Colonic mucosa (tissue), 4 donors: ENCODE measurements at regions of chr18 and their contacts with region 1.

Region 1: GRCh38 chr18:12890506-12890905 is 6.5 kb upstream of the PTPN2 start:
- DNase-seq: no peak
- H3K4me3 ChIP-seq: no peak overlapping the region
- H3K27ac ChIP-seq: no peak overlapping the region
- H3K4me1 ChIP-seq: no peaks in the 10 kb centered on the region
- H3K27me3 ChIP-seq: peaks cover 5% of the 10 kb centered on the region
- CTCF ChIP-seq: no peak

Region 2: DNA sequence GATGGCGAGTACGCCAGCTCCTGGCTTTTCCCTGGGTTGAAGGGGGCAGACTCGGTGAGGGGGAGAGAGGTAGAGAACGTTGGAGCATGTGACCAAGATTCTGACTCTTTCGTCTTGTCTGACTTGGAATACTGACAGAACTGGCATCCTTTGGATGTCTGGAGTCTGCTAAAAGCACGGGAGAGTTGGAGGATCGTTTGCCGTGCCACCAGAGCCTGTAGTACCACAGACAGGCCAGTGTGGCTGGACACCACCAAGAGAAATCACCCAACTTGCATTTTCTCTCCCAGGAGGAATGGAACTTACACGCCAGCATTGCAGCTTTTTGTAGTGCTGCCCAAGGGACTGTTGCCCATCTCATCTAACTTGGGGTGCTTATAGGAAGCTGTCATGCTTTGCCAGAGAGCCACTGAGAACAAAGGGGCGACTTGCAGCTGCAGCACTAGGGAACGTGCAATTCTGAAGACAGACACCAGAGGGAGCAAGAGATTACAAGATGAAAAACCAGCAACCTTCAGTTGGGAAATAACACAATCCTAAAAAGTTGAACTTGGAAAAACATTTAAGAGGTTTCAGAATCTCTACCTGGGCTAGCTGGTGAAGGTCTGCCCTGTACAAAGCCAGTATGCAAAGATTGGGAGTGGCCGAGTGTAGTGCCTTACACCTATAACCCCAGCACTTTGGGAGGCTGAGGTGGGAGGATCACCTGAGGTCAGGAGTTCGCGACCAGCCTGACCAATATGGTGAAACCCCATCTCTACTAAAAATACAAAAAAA is 163.5 kb before region 1 on chr18:
- intact Hi-C with region 1: loop called (anchors 5 kb)
- DNase-seq: peak; percentile 74
- H3K4me3 ChIP-seq: no peak overlapping the region
- H3K27ac ChIP-seq: no peak overlapping the region
- H3K4me1 ChIP-seq: no peaks in the 10 kb centered on the region
- H3K27me3 ChIP-seq: no peaks in the 10 kb centered on the region
- CTCF ChIP-seq: peak; percentile 75

Region 3: GRCh38 chr18:12744103-12744502 is 146.4 kb before region 1 on chr18:
- intact Hi-C with region 1: loop called (anchors 5 kb)
- DNase-seq: no peak
- H3K4me3 ChIP-seq: no peak overlapping the region
- H3K27ac ChIP-seq: no peak overlapping the region
- H3K4me1 ChIP-seq: no peaks in the 10 kb centered on the region
- H3K27me3 ChIP-seq: no peaks in the 10 kb centered on the region
- CTCF ChIP-seq: peak; percentile 41

Region 4: GRCh38 chr18:12947355-12948041 is 57.0 kb after region 1 on chr18 and contains the start of gene SEH1L:
- intact Hi-C with region 1: no loop called
- DNase-seq: peak; percentile 100
- H3K4me3 ChIP-seq: peak within 1 kb of the TSS; percentile 59
- H3K27ac ChIP-seq: peak within 1 kb of the TSS; percentile 92
- H3K4me1 ChIP-seq: no peaks in the 10 kb centered on the region
- H3K27me3 ChIP-seq: no peaks in the 10 kb centered on the region
- CTCF ChIP-seq: no peak
- total RNA-seq, gene SEH1L: 35.1 to 55.6 TPM